Activated CD4-positive, alpha-beta T cell treated with anti-CD3 and anti-CD28 coated beads for 36 hours (primary cell): ENCODE measurements at regions of chr14 and their contacts with region 1.

Region 1: GRCh38 chr14:70640938-70641547 is 673 bp upstream of the TTC9 start:
- DNase-seq: peak; percentile 79
- ATAC-seq: peak; percentile 80
- H3K4me3 Mint-ChIP-seq: peak overlapping the region; percentile 87
- H3K27ac Mint-ChIP-seq: peak overlapping the region; percentile 90
- H3K4me1 Mint-ChIP-seq: peaks cover 40% of the 10 kb centered on the region
- H3K27me3 Mint-ChIP-seq: no peaks in the 10 kb centered on the region

Region 2: DNA sequence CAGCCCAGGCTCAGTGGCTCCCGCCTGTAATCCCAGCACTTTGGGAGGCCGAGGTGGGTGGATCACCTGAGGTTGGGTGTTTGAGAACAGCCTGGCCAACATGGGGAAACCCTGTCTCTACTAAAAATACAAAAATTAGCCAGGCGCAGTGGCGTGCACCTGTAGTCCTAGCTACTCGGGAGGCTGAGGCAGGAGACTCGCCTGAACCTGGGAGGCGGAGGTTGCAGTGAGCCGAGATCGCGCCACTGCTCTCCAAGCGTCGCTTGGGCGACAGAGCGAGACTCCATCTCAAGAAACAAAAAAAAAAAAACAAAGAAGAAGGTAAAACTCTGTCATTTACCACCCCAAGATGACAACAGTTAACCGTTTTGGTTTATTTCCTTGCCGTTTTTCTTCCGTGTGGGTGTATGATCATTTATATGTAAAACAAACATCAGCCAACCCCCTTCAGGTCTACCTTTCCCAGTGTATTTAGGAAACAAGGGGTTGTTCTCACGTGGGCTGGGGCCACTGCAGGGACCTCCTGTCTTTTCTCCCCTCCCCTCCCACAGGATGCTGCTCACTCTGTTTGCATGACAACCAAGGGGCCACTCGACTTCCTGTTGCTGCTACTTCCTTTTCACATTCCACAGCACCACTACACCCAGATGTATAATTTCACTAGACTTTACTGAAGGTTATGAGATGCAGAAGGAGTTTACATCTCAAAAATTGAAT is 14.2 kb after region 1 on chr14:
- CTCF ChIA-PET with region 1: interaction called, 5 read pairs
- POLR2A ChIA-PET with region 1: interaction called, 7 read pairs
- intact Hi-C with region 1: loop called (anchors 1 to 2 kb)
- DNase-seq: peak; percentile 82
- ATAC-seq: peak; percentile 80
- H3K4me3 Mint-ChIP-seq: peak overlapping the region; percentile 76
- H3K27ac Mint-ChIP-seq: peak overlapping the region; percentile 99
- H3K4me1 Mint-ChIP-seq: peaks cover 90% of the 10 kb centered on the region
- H3K27me3 Mint-ChIP-seq: no peaks in the 10 kb centered on the region

Region 3: DNA sequence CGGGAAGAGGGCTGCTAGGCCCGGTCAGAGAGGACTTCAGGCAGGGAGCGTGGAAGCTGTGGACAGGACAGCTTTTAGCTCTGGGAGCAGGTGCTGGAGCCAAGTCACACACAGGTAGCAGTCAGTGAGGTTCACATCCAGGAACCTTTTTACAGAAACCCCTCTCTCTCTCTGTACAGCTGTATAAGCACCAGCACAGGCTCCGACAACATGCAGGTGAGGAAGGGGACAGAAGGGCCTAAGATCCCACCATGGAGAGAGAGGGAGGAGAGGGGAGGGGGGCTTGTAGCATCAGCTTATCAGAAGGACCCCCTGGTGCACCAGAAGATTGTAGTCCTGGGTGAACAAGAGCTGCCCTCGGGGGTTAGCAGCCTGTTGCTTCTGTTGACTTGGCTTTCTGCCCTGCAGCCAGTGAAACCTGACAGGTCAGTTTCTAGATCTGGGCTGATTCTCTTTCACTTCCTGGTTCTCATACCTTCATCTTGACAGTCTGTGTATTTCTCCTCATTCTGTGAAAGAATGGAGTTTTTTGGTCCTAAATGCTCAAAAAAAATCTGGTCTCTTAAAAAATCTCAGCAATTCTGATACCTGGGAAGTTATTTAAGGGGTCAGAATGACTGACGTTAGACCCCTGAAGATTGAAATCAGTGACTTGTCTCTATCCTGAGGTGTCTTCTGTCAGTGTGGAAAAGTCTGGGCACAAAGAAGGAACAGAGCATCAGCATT is 24.3 kb after region 1 on chr14:
- CTCF ChIA-PET with region 1: interaction called, 6 read pairs
- POLR2A ChIA-PET with region 1: interaction called, 3 read pairs
- intact Hi-C with region 1: loop called in 1 of 2 experiments (anchors 1 kb)
- DNase-seq: no peak
- ATAC-seq: no peak
- H3K4me3 Mint-ChIP-seq: no peak overlapping the region
- H3K27ac Mint-ChIP-seq: peak overlapping the region; percentile 67
- H3K4me1 Mint-ChIP-seq: peaks cover 51% of the 10 kb centered on the region
- H3K27me3 Mint-ChIP-seq: no peaks in the 10 kb centered on the region

Region 4: GRCh38 chr14:70714055-70714621 is 73.1 kb after region 1 on chr14:
- CTCF ChIA-PET with region 1: interaction called, 6 read pairs
- POLR2A ChIA-PET with region 1: no interaction called
- intact Hi-C with region 1: loop called (anchors 5 kb)
- DNase-seq: peak; percentile 64
- ATAC-seq: no peak
- H3K4me3 Mint-ChIP-seq: no peak overlapping the region
- H3K27ac Mint-ChIP-seq: no peak overlapping the region
- H3K4me1 Mint-ChIP-seq: peaks cover 3% of the 10 kb centered on the region
- H3K27me3 Mint-ChIP-seq: no peaks in the 10 kb centered on the region

Region 5: GRCh38 chr14:70809543-70810244 is 168.7 kb after region 1 on chr14:
- CTCF ChIA-PET with region 1: no interaction called
- POLR2A ChIA-PET with region 1: no interaction called
- intact Hi-C with region 1: loop called in 1 of 2 experiments (anchors 1 kb)
- DNase-seq: peak; percentile 96
- ATAC-seq: peak; percentile 87
- H3K4me3 Mint-ChIP-seq: no peak overlapping the region
- H3K27ac Mint-ChIP-seq: peak overlapping the region; percentile 20
- H3K4me1 Mint-ChIP-seq: peaks cover 4% of the 10 kb centered on the region
- H3K27me3 Mint-ChIP-seq: no peaks in the 10 kb centered on the region